Natural killer cell (primary cell): ENCODE measurements at regions of chr6 and their contacts with region 1.

Region 1: DNA sequence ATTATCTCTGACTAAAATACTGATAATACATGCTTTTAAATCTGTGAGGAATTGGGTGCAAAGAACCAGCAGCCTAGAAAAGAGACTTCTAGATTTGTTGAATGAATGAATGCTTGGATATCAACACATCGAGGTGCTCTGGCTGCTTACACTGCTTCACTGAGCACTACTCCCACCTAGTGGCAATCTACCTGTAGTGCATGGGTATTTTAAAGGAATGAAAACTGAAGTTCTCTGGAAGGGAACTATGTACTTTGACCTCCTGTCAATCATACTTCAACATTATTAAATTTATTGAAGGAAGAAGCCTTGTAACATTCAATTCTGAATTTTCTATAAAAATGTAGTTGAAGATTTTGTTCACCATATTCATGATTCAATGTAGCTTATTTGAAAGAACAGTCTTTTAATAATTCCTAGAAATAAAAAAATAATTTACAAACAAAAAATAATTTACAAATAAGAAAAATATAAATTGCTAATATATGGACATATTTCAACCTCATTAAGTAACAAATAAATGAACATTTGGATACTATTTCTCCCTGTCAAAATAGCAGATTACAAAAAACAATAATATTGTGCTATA is 111.2 kb upstream of the MMS22L start:
- DNase-seq: peak in 1 of 2 donors; percentile 77
- ATAC-seq: peak; percentile 84 to 90 (median 84)
- H3K4me3 ChIP-seq: no peak overlapping the region
- H3K4me3 Mint-ChIP-seq: no peak overlapping the region
- H3K27ac ChIP-seq: no peak overlapping the region
- H3K27ac Mint-ChIP-seq: no peak overlapping the region
- H3K4me1 ChIP-seq: no peaks in the 10 kb centered on the region
- H3K4me1 Mint-ChIP-seq: no peaks in the 10 kb centered on the region
- H3K27me3 ChIP-seq: no peaks in the 10 kb centered on the region
- H3K27me3 Mint-ChIP-seq: no peaks in the 10 kb centered on the region
- CTCF ChIP-seq: peak; percentile 80

Region 2: DNA sequence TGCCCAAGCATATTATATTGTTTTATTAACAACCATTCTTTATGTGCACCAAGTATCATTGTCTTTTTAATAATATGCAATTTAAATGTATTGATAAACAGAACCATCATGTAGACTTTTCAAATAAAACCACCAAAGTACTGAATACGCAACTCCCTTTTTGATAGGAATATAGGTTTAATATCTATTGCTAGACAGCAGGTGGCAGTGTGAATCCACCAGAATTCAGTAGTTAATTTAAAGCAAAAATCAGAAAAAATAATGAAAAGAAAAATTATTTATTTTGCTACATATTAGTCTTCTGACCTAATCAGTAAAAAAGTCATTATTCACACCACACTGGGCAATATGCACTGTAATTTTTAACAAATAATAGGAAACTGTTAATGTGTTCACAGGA is 326.0 kb before region 1 on chr6:
- intact Hi-C with region 1: loop called (anchors 10 kb)
- DNase-seq: peak in 1 of 2 donors; percentile 41
- ATAC-seq: no peak
- H3K4me3 ChIP-seq: no peak overlapping the region
- H3K4me3 Mint-ChIP-seq: no peak overlapping the region
- H3K27ac ChIP-seq: no peak overlapping the region
- H3K27ac Mint-ChIP-seq: no peak overlapping the region
- H3K4me1 ChIP-seq: no peaks in the 10 kb centered on the region
- H3K4me1 Mint-ChIP-seq: no peaks in the 10 kb centered on the region
- H3K27me3 ChIP-seq: no peaks in the 10 kb centered on the region
- H3K27me3 Mint-ChIP-seq: no peaks in the 10 kb centered on the region
- CTCF ChIP-seq: no peak

Region 3: GRCh38 chr6:97186416-97186999 is 207.7 kb before region 1 on chr6:
- intact Hi-C with region 1: loop called (anchors 1 kb)
- DNase-seq: peak; percentile 34 to 79
- ATAC-seq: peak; percentile 59 to 77 (median 71)
- H3K4me3 ChIP-seq: no peak overlapping the region
- H3K4me3 Mint-ChIP-seq: no peak overlapping the region
- H3K27ac ChIP-seq: no peak overlapping the region
- H3K27ac Mint-ChIP-seq: no peak overlapping the region
- H3K4me1 ChIP-seq: no peaks in the 10 kb centered on the region
- H3K4me1 Mint-ChIP-seq: no peaks in the 10 kb centered on the region
- H3K27me3 ChIP-seq: no peaks in the 10 kb centered on the region
- H3K27me3 Mint-ChIP-seq: no peaks in the 10 kb centered on the region
- CTCF ChIP-seq: peak; percentile 84

Region 4: GRCh38 chr6:97423190-97423589 is 28.9 kb after region 1 on chr6:
- intact Hi-C with region 1: no loop called
- DNase-seq: no peak
- ATAC-seq: no peak
- H3K4me3 ChIP-seq: no peak overlapping the region
- H3K4me3 Mint-ChIP-seq: no peak overlapping the region
- H3K27ac ChIP-seq: no peak overlapping the region
- H3K27ac Mint-ChIP-seq: no peak overlapping the region
- H3K4me1 ChIP-seq: no peaks in the 10 kb centered on the region
- H3K4me1 Mint-ChIP-seq: no peaks in the 10 kb centered on the region
- H3K27me3 ChIP-seq: no peaks in the 10 kb centered on the region
- H3K27me3 Mint-ChIP-seq: no peaks in the 10 kb centered on the region
- CTCF ChIP-seq: no peak